ENCODE measurements at regions of chr6 and their contacts with region 1.

Region 1: DNA sequence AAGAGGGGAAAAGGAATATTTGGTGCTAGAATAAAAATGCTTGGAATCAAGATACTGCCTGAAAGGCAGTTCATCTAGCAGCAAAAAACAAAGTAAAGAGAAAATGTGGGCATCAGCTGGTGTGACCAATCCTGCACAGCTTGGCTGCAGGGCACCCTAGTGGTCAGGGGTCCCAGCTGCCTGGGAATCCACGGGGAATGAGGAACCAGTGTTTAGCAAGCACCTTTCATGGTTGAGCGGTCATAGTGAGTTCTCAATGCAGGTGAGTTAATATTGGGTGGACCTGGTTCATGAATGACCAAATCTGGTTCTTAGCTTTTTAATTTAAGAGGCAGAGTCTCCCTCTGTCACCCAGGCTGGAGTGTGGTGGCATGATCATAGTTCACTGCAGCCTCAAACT is 53.3 kb downstream of the CAP2 start:
- DNase-seq: no peak
- H3K4me3 ChIP-seq: no peak overlapping the region
- H3K27ac ChIP-seq: no peak overlapping the region
- H3K4me1 ChIP-seq: no peaks in the 10 kb centered on the region
- H3K27me3 ChIP-seq: no peaks in the 10 kb centered on the region
- CTCF ChIP-seq: no peak

Region 2: DNA sequence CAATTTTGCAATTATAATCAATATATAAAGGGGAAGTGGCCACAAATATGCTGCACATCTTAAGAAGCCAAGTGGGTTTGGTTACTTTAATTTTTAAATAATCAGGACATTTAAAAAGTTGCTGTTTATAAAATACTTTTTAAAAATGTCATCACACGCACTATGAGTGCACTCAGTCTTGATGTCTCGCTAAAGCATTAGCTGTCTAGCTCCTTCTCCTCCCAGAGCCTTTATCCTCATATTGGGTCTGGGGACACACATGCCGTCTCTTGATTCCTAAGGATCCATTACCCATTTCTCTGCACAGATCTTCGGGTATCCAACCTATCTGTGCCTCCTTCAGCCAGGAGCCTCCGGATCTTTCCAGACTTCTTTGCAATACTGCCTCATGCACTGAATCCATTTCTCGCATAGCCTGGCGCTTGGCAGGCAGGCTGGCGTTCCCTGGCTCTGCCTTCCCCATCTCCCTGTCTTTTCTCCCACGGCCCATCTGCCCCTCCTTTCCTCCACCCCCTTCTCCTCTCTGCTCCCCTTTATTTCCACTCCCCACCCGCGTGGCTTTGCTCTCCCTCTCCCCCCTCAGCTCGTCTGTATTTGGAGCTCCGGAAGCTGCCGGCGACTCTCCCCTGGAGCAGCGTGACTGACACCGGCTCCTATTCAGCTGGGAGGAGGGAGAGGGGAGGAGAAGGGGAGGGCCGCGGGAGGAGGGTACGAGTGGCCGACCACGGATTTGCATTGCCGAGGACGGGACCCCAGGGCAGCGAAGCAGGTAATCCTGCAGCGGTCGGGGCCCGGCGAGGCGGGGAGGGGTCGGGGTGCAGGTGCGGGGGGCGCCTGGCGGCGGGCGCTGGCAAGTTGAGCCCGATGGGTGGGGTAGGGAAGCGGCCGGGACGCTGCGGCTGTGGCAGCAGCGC is 53.5 kb before region 1 on chr6 and contains the start of gene CAP2:
- CTCF ChIA-PET with region 1: no interaction called
- POLR2A ChIA-PET with region 1: no interaction called
- intact Hi-C with region 1: no loop called
- DNase-seq: peak; percentile 45 to 74
- H3K4me3 ChIP-seq: peak within 1 kb of the TSS; percentile 74
- H3K27ac ChIP-seq: peak within 1 kb of the TSS; percentile 50
- H3K4me1 ChIP-seq: peaks cover 37% of the 10 kb centered on the region
- H3K27me3 ChIP-seq: no peaks in the 10 kb centered on the region
- CTCF ChIP-seq: no peak
- total RNA-seq, gene CAP2: 10.0 and 12.0 TPM in 2 replicates

Region 3: GRCh38 chr6:17417817-17418216 is 28.9 kb before region 1 on chr6:
- CTCF ChIA-PET with region 1: interaction called, 16 read pairs
- POLR2A ChIA-PET with region 1: no interaction called
- intact Hi-C with region 1: no loop called
- DNase-seq: peak; percentile 61 to 70
- H3K4me3 ChIP-seq: no peak overlapping the region
- H3K27ac ChIP-seq: peak overlapping the region; percentile 67
- H3K4me1 ChIP-seq: peaks cover 23% of the 10 kb centered on the region; the same call in 1 of the 2 replicates
- H3K27me3 ChIP-seq: no peaks in the 10 kb centered on the region
- CTCF ChIP-seq: no peak